Mammary epithelial cell (primary cell): ENCODE measurements at regions of chr1 and their contacts with region 1.

Region 1: GRCh38 chr1:60153961-60154360 is 80.4 kb upstream of the C1orf87 start:
- DNase-seq: no peak
- H3K4me3 ChIP-seq: no peak overlapping the region
- H3K27ac ChIP-seq: no peak overlapping the region
- H3K4me1 ChIP-seq: no peaks in the 10 kb centered on the region
- H3K27me3 ChIP-seq: peaks cover 3% of the 10 kb centered on the region
- CTCF ChIP-seq: no peak

Region 2: GRCh38 chr1:59971464-59971911 is 182.5 kb before region 1 on chr1:
- CTCF ChIA-PET with region 1: no interaction called
- dilution Hi-C with region 1: no loop called
- in situ Hi-C with region 1: no loop called
- intact Hi-C with region 1: loop called (anchors 10 kb)
- DNase-seq: peak; percentile 55
- H3K4me3 ChIP-seq: no peak overlapping the region
- H3K27ac ChIP-seq: no peak overlapping the region
- H3K4me1 ChIP-seq: no peaks in the 10 kb centered on the region
- H3K27me3 ChIP-seq: peaks cover 7% of the 10 kb centered on the region
- CTCF ChIP-seq: peak; percentile 83 to 93

Region 3: GRCh38 chr1:60425528-60425927 is 271.6 kb after region 1 on chr1:
- CTCF ChIA-PET with region 1: no interaction called
- dilution Hi-C with region 1: no loop called
- in situ Hi-C with region 1: no loop called
- intact Hi-C with region 1: loop called (anchors 10 kb)
- DNase-seq: no peak
- H3K4me3 ChIP-seq: no peak overlapping the region
- H3K27ac ChIP-seq: no peak overlapping the region
- H3K4me1 ChIP-seq: no peaks in the 10 kb centered on the region
- H3K27me3 ChIP-seq: no peaks in the 10 kb centered on the region
- CTCF ChIP-seq: peak; percentile 28 to 49

Region 4: GRCh38 chr1:60969971-60970509 is 816.1 kb after region 1 on chr1:
- CTCF ChIA-PET with region 1: no interaction called
- dilution Hi-C with region 1: no loop called
- in situ Hi-C with region 1: no loop called
- intact Hi-C with region 1: loop called (anchors 2 kb)
- DNase-seq: peak; percentile 46
- H3K4me3 ChIP-seq: no peak overlapping the region
- H3K27ac ChIP-seq: no peak overlapping the region
- H3K4me1 ChIP-seq: peaks cover 33% of the 10 kb centered on the region
- H3K27me3 ChIP-seq: no peaks in the 10 kb centered on the region
- CTCF ChIP-seq: peak; percentile 47 to 52

Region 5: GRCh38 chr1:61842871-61843514 is 1689.0 kb after region 1 on chr1:
- CTCF ChIA-PET with region 1: no interaction called
- dilution Hi-C with region 1: no loop called
- in situ Hi-C with region 1: no loop called
- intact Hi-C with region 1: loop called (anchors 10 kb)
- DNase-seq: peak; percentile 5
- H3K4me3 ChIP-seq: no peak overlapping the region
- H3K27ac ChIP-seq: no peak overlapping the region
- H3K4me1 ChIP-seq: peaks cover 11% of the 10 kb centered on the region
- H3K27me3 ChIP-seq: no peaks in the 10 kb centered on the region
- CTCF ChIP-seq: peak in 1 of 2 donors; percentile 24